ENCODE measurements at regions of chr14 and their contacts with region 1.

Region 1: GRCh38 chr14:51908086-51908485 is 47.7 kb downstream of the GNG2 start:
- DNase-seq: no peak
- ATAC-seq: no peak
- H3K4me3 ChIP-seq: no peak overlapping the region
- H3K4me3 Mint-ChIP-seq: no peak overlapping the region
- H3K27ac ChIP-seq: peak overlapping the region in 1 of 2 experiments; percentile 47
- H3K27ac Mint-ChIP-seq: no peak overlapping the region
- H3K4me1 ChIP-seq: peaks cover 28% of the 10 kb centered on the region
- H3K4me1 Mint-ChIP-seq: peaks cover 68% of the 10 kb centered on the region
- H3K27me3 ChIP-seq: no peaks in the 10 kb centered on the region
- H3K27me3 Mint-ChIP-seq: no peaks in the 10 kb centered on the region
- CTCF ChIP-seq: no peak

Region 2: GRCh38 chr14:51410897-51411296 is 497.2 kb before region 1 on chr14:
- CTCF ChIA-PET with region 1: no interaction called
- POLR2A ChIA-PET with region 1: no interaction called
- intact Hi-C with region 1: no loop called
- DNase-seq: no peak
- ATAC-seq: no peak
- H3K4me3 ChIP-seq: no peak overlapping the region
- H3K4me3 Mint-ChIP-seq: no peak overlapping the region
- H3K27ac ChIP-seq: no peak overlapping the region
- H3K27ac Mint-ChIP-seq: no peak overlapping the region
- H3K4me1 ChIP-seq: no peaks in the 10 kb centered on the region
- H3K4me1 Mint-ChIP-seq: no peaks in the 10 kb centered on the region
- H3K27me3 ChIP-seq: no peaks in the 10 kb centered on the region
- H3K27me3 Mint-ChIP-seq: peaks cover 15% of the 10 kb centered on the region
- CTCF ChIP-seq: no peak

Region 3: DNA sequence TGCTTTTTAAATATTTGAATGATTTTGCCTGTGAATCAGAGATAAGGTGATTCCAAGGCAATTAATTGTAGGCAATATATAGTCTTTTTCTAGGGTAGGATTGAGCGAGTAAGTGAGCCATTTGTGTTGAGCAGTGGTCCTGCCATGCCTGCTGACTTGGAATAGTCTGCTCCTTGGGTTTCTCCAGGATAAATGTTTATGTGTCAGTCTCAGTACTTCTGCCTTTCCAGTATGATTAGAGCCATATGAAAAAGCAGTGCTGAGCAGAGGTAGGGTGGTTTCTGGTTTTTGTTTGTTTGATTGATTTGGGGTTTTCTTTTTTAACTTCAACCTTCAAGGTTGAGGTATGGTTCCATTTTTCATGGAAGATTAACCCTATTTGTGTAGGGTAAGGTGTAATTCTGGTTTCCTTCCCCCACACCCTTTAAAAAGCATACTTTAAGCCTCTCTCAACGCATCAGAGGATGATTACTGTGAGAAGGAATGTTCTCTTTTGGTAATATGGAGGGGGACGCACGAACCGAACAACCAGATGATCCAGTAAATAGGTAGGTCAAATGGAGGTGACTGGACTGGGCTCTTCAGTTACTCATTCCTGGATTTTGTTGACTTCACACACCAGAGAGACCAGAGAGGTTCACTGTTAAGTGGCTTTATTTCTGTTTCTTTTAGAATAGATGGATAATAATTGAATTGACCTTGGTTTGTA is 233.6 kb before region 1 on chr14:
- CTCF ChIA-PET with region 1: no interaction called
- POLR2A ChIA-PET with region 1: no interaction called
- intact Hi-C with region 1: no loop called
- DNase-seq: no peak
- ATAC-seq: no peak
- H3K4me3 ChIP-seq: no peak overlapping the region
- H3K4me3 Mint-ChIP-seq: no peak overlapping the region
- H3K27ac ChIP-seq: no peak overlapping the region
- H3K27ac Mint-ChIP-seq: no peak overlapping the region
- H3K4me1 ChIP-seq: no peaks in the 10 kb centered on the region
- H3K4me1 Mint-ChIP-seq: no peaks in the 10 kb centered on the region
- H3K27me3 ChIP-seq: no peaks in the 10 kb centered on the region
- H3K27me3 Mint-ChIP-seq: no peaks in the 10 kb centered on the region
- CTCF ChIP-seq: no peak

Region 4: DNA sequence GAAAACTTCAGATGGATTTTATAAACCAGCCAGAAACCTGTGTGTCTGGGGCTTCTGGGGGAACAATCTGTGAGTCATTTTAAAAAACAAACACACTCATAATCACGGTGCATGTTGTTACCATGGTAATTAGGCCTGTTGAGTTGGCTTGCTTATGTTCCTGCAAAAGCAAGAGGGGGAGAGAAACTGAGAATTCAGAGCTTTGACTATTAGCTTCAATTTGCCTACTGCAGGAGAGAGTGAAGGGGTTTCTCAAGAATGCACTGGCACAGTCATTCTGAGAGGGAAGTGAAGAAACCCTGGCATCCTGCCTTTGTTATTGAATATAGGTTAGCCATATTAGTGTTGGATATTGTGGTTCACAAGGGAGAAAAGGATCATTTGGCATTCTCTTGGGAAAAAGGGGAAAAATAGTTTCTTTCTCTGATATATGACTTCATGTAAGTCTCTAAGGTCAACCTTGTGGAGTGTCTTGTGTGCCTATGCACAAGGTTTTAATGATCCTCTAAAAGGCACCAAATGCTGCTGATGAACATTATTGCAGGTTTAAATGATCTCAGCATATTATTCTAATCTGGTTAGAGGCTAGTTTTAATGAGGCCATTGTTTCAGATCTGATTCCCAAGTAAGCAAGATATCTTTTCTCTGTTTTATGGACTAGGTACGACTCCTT is 34.7 kb before region 1 on chr14:
- CTCF ChIA-PET with region 1: no interaction called
- POLR2A ChIA-PET with region 1: no interaction called
- intact Hi-C with region 1: no loop called
- DNase-seq: peak in 3 of 9 experiments; percentile 22 to 77 (median 66)
- ATAC-seq: peak; percentile 57
- H3K4me3 ChIP-seq: no peak overlapping the region
- H3K4me3 Mint-ChIP-seq: no peak overlapping the region
- H3K27ac ChIP-seq: peak overlapping the region in 1 of 2 experiments; percentile 49
- H3K27ac Mint-ChIP-seq: peak overlapping the region; percentile 58
- H3K4me1 ChIP-seq: peaks cover 66% of the 10 kb centered on the region
- H3K4me1 Mint-ChIP-seq: peaks cover 54% of the 10 kb centered on the region
- H3K27me3 ChIP-seq: no peaks in the 10 kb centered on the region
- H3K27me3 Mint-ChIP-seq: no peaks in the 10 kb centered on the region
- CTCF ChIP-seq: no peak

Region 5: GRCh38 chr14:51895375-51895774 is 12.7 kb before region 1 on chr14:
- CTCF ChIA-PET with region 1: interaction called, 10 read pairs
- POLR2A ChIA-PET with region 1: interaction called, 6 read pairs
- intact Hi-C with region 1: loop called in 1 of 2 experiments (anchors 1 kb)
- DNase-seq: no peak
- ATAC-seq: no peak
- H3K4me3 ChIP-seq: no peak overlapping the region
- H3K4me3 Mint-ChIP-seq: no peak overlapping the region
- H3K27ac ChIP-seq: no peak overlapping the region
- H3K27ac Mint-ChIP-seq: no peak overlapping the region
- H3K4me1 ChIP-seq: peaks cover 19% of the 10 kb centered on the region
- H3K4me1 Mint-ChIP-seq: peaks cover 84% of the 10 kb centered on the region
- H3K27me3 ChIP-seq: no peaks in the 10 kb centered on the region
- H3K27me3 Mint-ChIP-seq: no peaks in the 10 kb centered on the region
- CTCF ChIP-seq: no peak

Measured in CD8-positive, alpha-beta T cell (primary cell).